ENCODE measurements at regions of chr1 and their contacts with region 1.

Region 1: GRCh38 chr1:100010804-100011203 is 41.0 kb downstream of the SLC35A3 start:
- DNase-seq: no peak
- ATAC-seq: no peak
- H3K4me3 ChIP-seq: no peak overlapping the region
- H3K27ac ChIP-seq: no peak overlapping the region
- H3K4me1 ChIP-seq: no peaks in the 10 kb centered on the region
- H3K27me3 ChIP-seq: no peaks in the 10 kb centered on the region
- CTCF ChIP-seq: no peak
- EP300 ChIP-seq: no peak
- POLR2A ChIP-seq: no peak
- RAD21 ChIP-seq: no peak

Region 2: GRCh38 chr1:99457381-99458165 is 553.2 kb before region 1 on chr1:
- CTCF ChIA-PET with region 1: no interaction called
- POLR2A ChIA-PET with region 1: no interaction called
- RAD21 ChIA-PET with region 1: no interaction called
- SMC1A ChIA-PET with region 1: no interaction called
- in situ Hi-C with region 1: no loop called
- intact Hi-C with region 1: no loop called
- DNase-seq: no peak
- ATAC-seq: no peak
- H3K4me3 ChIP-seq: no peak overlapping the region
- H3K27ac ChIP-seq: no peak overlapping the region
- H3K4me1 ChIP-seq: no peaks in the 10 kb centered on the region
- H3K27me3 ChIP-seq: no peaks in the 10 kb centered on the region; a peak in 1 of 4 replicates
- CTCF ChIP-seq: no peak
- EP300 ChIP-seq: no peak
- POLR2A ChIP-seq: no peak
- RAD21 ChIP-seq: no peak

Region 3: DNA sequence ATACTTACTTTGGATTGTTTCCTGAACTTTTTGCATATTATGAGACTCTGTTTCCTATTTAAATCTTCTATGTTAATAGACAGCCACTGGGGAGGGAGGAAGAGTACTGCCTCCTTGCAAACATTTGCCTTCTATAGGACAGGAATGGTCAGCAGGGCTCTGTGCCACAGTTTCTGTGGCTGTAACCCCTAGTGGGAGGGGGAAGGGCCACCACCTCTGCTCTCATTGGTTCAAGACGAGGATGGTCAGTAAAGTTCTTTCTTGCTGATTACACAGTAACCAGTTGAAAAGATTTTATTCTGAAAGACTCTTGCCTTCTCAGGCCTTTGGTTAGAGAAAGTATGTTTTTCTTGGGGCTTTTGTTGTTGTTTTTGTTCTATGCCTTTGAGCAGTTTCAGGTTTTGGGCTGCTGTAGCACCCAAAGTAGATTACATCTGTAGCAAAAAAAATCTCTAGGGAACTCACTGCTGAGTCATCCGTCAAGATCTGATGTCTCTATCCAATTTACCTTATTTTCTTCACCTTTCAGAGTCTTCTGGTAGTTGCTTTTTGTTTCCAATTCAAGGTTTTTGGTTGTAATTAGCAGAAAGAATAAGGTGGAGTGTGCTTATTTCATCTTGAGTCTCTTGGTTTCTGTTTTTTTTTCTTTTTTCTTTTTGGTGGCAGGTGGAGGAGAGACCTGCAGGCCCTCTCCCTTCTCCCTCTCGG is 17.9 kb before region 1 on chr1:
- CTCF ChIA-PET with region 1: interaction called, 5 read pairs
- POLR2A ChIA-PET with region 1: interaction called, 6 read pairs
- RAD21 ChIA-PET with region 1: no interaction called
- SMC1A ChIA-PET with region 1: interaction called, 10 read pairs
- in situ Hi-C with region 1: no loop called
- intact Hi-C with region 1: no loop called
- DNase-seq: peak; percentile 15
- ATAC-seq: peak; percentile 81
- H3K4me3 ChIP-seq: no peak overlapping the region
- H3K27ac ChIP-seq: no peak overlapping the region
- H3K4me1 ChIP-seq: no peaks in the 10 kb centered on the region
- H3K27me3 ChIP-seq: no peaks in the 10 kb centered on the region
- CTCF ChIP-seq: no peak
- EP300 ChIP-seq: no peak
- POLR2A ChIP-seq: no peak
- RAD21 ChIP-seq: no peak

Region 4: DNA sequence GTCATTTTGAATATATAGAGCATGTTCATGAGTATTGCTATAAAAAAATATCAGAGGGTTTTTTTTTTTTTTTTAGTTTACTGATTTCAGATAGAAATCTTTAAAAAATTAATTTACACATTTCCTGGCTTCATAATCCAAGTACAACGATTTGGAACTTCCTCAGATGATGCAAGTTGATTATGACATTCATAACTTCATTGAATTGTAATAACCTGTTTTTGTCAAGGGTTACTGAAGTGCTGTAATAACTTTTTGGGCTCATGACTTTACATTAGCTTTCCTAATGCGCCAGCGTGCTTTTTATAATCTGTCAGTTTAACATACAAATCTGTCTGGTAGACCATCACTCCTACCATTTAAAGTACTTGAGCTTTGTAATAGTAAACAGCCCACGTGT is 40.6 kb after region 1 on chr1:
- CTCF ChIA-PET with region 1: no interaction called
- POLR2A ChIA-PET with region 1: no interaction called
- RAD21 ChIA-PET with region 1: no interaction called
- SMC1A ChIA-PET with region 1: no interaction called
- in situ Hi-C with region 1: no loop called
- intact Hi-C with region 1: no loop called
- DNase-seq: no peak
- ATAC-seq: no peak
- H3K4me3 ChIP-seq: no peak overlapping the region
- H3K27ac ChIP-seq: no peak overlapping the region
- H3K4me1 ChIP-seq: peaks cover 13% of the 10 kb centered on the region
- H3K27me3 ChIP-seq: no peaks in the 10 kb centered on the region
- CTCF ChIP-seq: no peak
- EP300 ChIP-seq: no peak
- POLR2A ChIP-seq: no peak
- RAD21 ChIP-seq: no peak

Measured in GM12878 (cell line).